Activated CD4-positive, alpha-beta memory T cell treated with anti-CD3 and anti-CD28 coated beads for 36 hours (primary cell): ENCODE measurements at regions of chr15 and their contacts with region 1.

Region 1: GRCh38 chr15:75801859-75802593 is 41.2 kb upstream of the UBE2Q2 start:
- DNase-seq: peak; percentile 88
- H3K4me3 Mint-ChIP-seq: peak overlapping the region; percentile 43
- H3K27ac Mint-ChIP-seq: no peak overlapping the region
- H3K4me1 Mint-ChIP-seq: peaks cover 4% of the 10 kb centered on the region
- H3K27me3 Mint-ChIP-seq: peaks cover 34% of the 10 kb centered on the region

Region 2: GRCh38 chr15:75684642-75685041 is 117.4 kb before region 1 on chr15:
- CTCF ChIA-PET with region 1: interaction called, 33 read pairs
- POLR2A ChIA-PET with region 1: no interaction called
- intact Hi-C with region 1: loop called (anchors 1 kb)
- DNase-seq: no peak
- H3K4me3 Mint-ChIP-seq: no peak overlapping the region
- H3K27ac Mint-ChIP-seq: no peak overlapping the region
- H3K4me1 Mint-ChIP-seq: no peaks in the 10 kb centered on the region
- H3K27me3 Mint-ChIP-seq: peaks cover 2% of the 10 kb centered on the region

Region 3: GRCh38 chr15:75723847-75724660 is 78.0 kb before region 1 on chr15:
- CTCF ChIA-PET with region 1: interaction called, 89 read pairs
- POLR2A ChIA-PET with region 1: no interaction called
- intact Hi-C with region 1: loop called (anchors 1 kb)
- DNase-seq: peak; percentile 73
- H3K4me3 Mint-ChIP-seq: no peak overlapping the region
- H3K27ac Mint-ChIP-seq: no peak overlapping the region
- H3K4me1 Mint-ChIP-seq: peaks cover 8% of the 10 kb centered on the region
- H3K27me3 Mint-ChIP-seq: peaks cover 9% of the 10 kb centered on the region

Region 4: DNA sequence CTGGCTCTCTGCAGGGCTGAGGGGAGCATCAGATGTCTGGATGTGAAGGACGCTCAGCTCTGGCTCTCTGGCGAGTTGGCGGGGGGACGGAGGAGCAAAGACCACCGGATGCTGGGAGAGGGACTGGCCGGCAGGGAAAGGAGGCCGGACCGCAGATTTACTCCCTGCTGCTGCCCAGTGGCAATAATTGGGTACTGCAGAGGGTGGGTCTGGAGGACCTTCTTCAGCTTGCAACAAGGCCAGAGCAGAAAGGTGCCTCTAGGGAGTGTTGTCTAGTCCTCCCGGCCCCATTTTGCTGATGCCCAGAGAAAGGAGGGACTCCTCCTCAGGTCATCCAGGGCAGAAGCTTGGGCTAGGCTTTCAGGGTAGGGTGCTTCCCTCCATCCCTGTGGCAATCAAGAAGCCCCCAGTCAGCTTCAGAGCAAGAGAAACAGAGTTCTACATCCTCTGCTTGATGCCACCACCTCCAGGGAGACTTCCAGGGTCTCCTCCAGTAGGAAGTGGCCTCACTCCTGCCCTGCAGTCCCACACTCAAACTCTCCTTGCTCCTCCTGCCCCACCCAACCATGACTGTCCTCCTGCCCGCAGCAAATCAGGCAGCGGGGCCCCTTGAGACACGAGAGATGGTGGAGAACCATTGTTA is 69.1 kb before region 1 on chr15:
- CTCF ChIA-PET with region 1: interaction called, 89 read pairs
- POLR2A ChIA-PET with region 1: no interaction called
- intact Hi-C with region 1: loop called (anchors 1 kb)
- DNase-seq: peak; percentile 74
- H3K4me3 Mint-ChIP-seq: no peak overlapping the region
- H3K27ac Mint-ChIP-seq: no peak overlapping the region
- H3K4me1 Mint-ChIP-seq: peaks cover 8% of the 10 kb centered on the region
- H3K27me3 Mint-ChIP-seq: peaks cover 6% of the 10 kb centered on the region

Region 5: GRCh38 chr15:75815811-75816719 is 14.0 kb after region 1 on chr15:
- CTCF ChIA-PET with region 1: interaction called, 18 read pairs
- POLR2A ChIA-PET with region 1: no interaction called
- intact Hi-C with region 1: no loop called
- DNase-seq: no peak
- H3K4me3 Mint-ChIP-seq: no peak overlapping the region
- H3K27ac Mint-ChIP-seq: no peak overlapping the region
- H3K4me1 Mint-ChIP-seq: peaks cover 12% of the 10 kb centered on the region
- H3K27me3 Mint-ChIP-seq: no peaks in the 10 kb centered on the region

Region 6: DNA sequence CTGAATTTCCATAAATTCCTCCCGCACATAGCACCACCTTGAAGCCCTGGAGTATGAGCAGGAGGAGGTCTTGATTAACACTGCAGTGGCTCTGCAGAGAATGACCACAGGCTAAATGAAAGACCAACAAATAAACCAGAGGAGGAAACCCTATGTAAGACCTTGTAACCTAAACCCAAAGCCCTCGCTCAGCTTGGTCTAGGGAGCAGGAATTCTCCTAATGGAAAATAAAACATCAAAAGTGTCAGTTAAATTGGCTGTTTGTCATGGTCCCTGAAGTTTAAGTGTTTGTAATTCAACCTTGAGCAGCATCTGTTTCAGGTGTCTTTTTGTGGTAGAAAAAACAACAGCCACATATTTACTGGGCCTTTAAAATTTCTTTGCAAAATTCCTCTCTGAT is 32.0 kb after region 1 on chr15:
- CTCF ChIA-PET with region 1: no interaction called
- POLR2A ChIA-PET with region 1: no interaction called
- intact Hi-C with region 1: no loop called
- DNase-seq: no peak
- H3K4me3 Mint-ChIP-seq: no peak overlapping the region
- H3K27ac Mint-ChIP-seq: no peak overlapping the region
- H3K4me1 Mint-ChIP-seq: peaks cover 5% of the 10 kb centered on the region
- H3K27me3 Mint-ChIP-seq: no peaks in the 10 kb centered on the region